A673 (cell line): ENCODE measurements at regions of chr12 and their contacts with region 1.

Region 1: GRCh38 chr12:129911428-129912049 is 7.7 kb upstream of the TMEM132D start:
- DNase-seq: peak; percentile 45
- H3K4me3 ChIP-seq: no peak overlapping the region
- H3K27ac ChIP-seq: no peak overlapping the region
- H3K4me1 ChIP-seq: no peaks in the 10 kb centered on the region
- H3K27me3 ChIP-seq: no peaks in the 10 kb centered on the region
- CTCF ChIP-seq: peak; percentile 59

Region 2: DNA sequence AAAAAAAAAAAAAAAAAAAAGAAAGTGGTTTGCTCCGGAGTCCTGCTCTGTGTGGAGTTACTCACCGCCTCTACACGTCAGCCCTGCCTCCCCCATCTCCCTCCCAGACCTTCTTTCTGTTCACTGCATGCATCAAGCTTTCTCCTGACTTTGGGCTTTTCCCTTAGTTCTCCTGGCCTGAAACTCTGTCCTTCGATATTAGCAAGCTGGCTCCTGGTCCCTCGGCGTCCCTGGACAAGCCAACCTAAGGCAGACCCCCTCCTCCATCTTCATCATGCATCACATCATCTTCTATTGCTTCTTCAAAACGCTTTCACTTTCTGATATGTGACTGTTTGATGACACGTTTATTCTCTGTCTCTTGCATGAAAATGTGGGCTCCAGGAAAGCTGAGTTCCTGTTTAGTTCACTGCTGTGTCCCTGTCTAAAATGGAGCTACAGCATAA is 1128.4 kb before region 1 on chr12:
- CTCF ChIA-PET with region 1: no interaction called
- POLR2A ChIA-PET with region 1: no interaction called
- intact Hi-C with region 1: loop called (anchors 5 kb)
- DNase-seq: no peak
- H3K4me3 ChIP-seq: no peak overlapping the region
- H3K27ac ChIP-seq: no peak overlapping the region
- H3K4me1 ChIP-seq: no peaks in the 10 kb centered on the region
- H3K27me3 ChIP-seq: no peaks in the 10 kb centered on the region
- CTCF ChIP-seq: no peak